Activated CD4-positive, alpha-beta memory T cell treated with anti-CD3 and anti-CD28 coated beads for 36 hours (primary cell): ENCODE measurements at regions of chr4 and their contacts with region 1.

Region 1: DNA sequence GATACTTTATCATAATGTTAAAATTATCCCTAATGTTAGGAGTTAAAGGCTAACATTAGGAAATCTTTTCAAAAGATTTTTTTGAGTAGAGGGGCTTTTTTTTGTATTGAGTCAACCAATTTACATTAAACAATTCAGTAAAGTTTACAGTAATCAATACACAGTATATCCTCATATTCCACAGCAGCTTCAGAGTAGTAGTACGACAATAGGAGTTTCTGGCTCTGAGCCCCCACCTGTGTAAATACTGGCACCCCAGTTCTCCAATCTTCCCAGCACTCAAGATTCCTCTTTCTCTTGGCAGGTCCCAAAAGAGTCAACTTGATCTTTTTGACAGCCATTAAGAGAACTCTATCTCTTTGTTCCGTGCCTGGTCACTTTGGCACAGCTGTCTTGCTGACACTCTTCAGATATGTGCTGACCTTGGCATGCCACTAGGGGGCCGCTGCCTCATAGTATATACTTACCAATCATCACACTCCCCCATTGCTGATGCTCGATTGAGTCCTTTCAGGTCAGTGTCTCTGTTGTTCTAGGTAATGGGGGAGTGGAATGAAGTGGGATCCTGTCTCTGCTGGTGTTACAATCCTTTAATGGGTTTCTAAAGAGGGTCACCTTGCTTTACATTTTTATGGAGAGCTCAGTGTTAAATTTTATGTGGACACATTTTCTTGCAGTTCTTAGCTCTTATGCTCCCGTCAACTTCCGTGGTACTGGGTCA is 19.5 kb upstream of the CCNI start:
- DNase-seq: peak; percentile 83
- H3K4me3 Mint-ChIP-seq: no peak overlapping the region
- H3K27ac Mint-ChIP-seq: no peak overlapping the region
- H3K4me1 Mint-ChIP-seq: peaks cover 14% of the 10 kb centered on the region
- H3K27me3 Mint-ChIP-seq: no peaks in the 10 kb centered on the region

Region 2: DNA sequence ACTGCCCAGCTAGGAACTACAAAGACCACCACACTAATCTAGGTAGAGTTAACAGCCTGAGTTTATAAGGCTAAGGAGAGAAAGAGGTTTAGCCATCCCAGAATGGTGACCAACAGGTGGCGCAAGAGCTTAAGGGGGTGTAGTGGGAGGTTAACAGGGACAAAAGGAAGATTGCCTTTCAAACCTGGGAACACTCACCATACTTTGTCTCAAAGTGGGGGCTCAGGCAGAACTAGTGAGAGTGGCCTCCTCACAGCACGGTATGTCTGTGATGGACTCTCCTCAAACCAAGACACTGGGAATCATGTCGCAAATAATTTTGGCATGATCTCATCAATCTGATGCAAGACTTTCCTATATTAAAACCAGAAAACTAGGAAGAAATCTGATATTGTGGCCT is 42.9 kb before region 1 on chr4:
- CTCF ChIA-PET with region 1: interaction called, 10 read pairs
- POLR2A ChIA-PET with region 1: no interaction called
- intact Hi-C with region 1: no loop called
- DNase-seq: peak; percentile 69
- H3K4me3 Mint-ChIP-seq: no peak overlapping the region
- H3K27ac Mint-ChIP-seq: peak overlapping the region; percentile 34
- H3K4me1 Mint-ChIP-seq: no peaks in the 10 kb centered on the region
- H3K27me3 Mint-ChIP-seq: no peaks in the 10 kb centered on the region

Region 3: DNA sequence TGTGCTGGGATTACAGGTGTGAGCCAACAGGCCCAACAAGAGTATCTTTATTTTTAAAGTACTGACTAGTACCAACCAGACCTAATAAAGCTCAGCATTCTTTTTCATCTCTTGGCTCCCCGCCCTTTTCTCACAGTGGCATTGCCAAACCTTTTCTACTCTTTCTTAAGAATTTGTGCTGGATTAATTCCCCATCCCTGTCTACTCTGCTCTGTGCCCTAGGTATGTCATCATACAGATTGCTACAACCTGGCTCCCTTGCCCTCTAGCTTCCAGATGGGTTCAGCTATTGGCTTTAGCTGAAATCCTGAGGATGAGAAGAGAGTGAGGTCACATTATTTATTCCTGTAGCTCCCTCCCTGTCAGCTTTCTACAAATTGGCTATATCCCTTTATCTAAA is 15.5 kb after region 1 on chr4:
- CTCF ChIA-PET with region 1: interaction called, 26 read pairs
- POLR2A ChIA-PET with region 1: no interaction called
- intact Hi-C with region 1: no loop called
- DNase-seq: no peak
- H3K4me3 Mint-ChIP-seq: no peak overlapping the region
- H3K27ac Mint-ChIP-seq: no peak overlapping the region
- H3K4me1 Mint-ChIP-seq: no peaks in the 10 kb centered on the region
- H3K27me3 Mint-ChIP-seq: peaks cover 9% of the 10 kb centered on the region

Region 4: DNA sequence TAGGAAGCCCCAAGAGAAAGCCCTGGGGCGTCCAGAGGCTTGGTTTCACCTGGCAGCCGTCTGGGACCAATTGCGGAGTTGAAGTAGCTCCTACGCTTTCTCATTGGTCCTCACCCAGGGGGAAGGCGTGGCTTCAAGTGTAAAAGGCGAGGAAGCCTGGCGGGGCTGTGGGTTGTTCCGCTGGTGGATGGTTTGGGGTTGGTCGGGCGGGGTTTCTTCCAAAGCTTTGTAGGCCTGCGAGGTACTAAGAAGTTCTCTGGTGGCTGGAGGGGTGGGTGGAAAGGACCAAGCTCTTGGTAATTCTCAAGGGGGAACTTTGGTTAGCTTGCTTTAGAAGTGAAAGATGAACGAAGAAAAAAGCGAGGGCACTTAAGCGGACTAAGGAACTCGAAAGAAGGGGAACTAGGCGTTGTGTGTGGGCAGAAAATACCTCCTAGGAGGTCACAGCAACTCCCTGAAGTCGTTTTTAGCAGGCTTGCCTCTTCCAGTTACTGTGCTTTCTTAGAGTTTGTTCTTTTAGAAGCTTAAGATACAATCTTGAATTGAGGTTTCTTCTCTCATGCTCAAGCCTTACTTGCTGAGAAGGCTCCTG is 98.3 kb after region 1 on chr4:
- CTCF ChIA-PET with region 1: interaction called, 252 read pairs
- POLR2A ChIA-PET with region 1: no interaction called
- intact Hi-C with region 1: no loop called
- DNase-seq: peak; percentile 85
- H3K4me3 Mint-ChIP-seq: peak overlapping the region; percentile 82
- H3K27ac Mint-ChIP-seq: peak overlapping the region; percentile 81
- H3K4me1 Mint-ChIP-seq: peaks cover 18% of the 10 kb centered on the region
- H3K27me3 Mint-ChIP-seq: peaks cover 2% of the 10 kb centered on the region

Region 5: DNA sequence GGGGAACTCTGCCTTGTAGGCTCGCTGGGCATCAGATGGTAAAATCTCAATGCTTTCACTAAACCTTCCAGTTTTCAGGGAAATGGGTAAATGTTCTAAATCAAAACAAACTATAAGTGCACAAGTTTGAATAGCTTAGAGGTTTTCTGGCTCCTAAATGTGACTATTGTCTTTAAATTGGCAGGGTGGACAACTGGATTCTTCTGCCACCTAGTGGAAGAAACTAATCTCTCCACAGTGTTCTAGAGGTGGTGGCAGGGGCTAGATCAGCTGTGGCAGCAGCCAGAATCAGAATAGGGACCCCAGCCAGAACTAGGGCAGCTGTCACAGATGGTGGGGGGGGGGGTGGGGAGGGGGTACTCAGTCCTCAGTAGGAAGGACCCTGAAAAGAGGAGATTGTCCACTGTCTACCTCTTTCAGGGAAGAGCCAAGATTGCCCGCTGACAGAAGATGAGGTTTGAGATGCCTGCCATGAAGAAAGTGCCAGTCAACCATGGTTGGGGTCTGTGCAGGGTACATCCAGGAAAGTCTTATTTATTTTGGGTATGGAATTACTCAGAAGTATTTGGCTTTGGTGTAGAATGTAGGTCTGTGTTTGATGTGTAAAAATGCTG is 263.2 kb after region 1 on chr4:
- CTCF ChIA-PET with region 1: interaction called, 11 read pairs
- POLR2A ChIA-PET with region 1: no interaction called
- intact Hi-C with region 1: no loop called
- DNase-seq: no peak
- H3K4me3 Mint-ChIP-seq: no peak overlapping the region
- H3K27ac Mint-ChIP-seq: no peak overlapping the region
- H3K4me1 Mint-ChIP-seq: no peaks in the 10 kb centered on the region
- H3K27me3 Mint-ChIP-seq: peaks cover 2% of the 10 kb centered on the region